Calu3 (cell line): ENCODE measurements at regions of chr7 and their contacts with region 1.

Region 1: GRCh38 chr7:109844362-109844761 is 1246.6 kb upstream of the LRRN3 start:
- DNase-seq: peak; percentile 34
- H3K4me3 Mint-ChIP-seq: no peak overlapping the region
- H3K27ac Mint-ChIP-seq: no peak overlapping the region
- H3K4me1 Mint-ChIP-seq: no peaks in the 10 kb centered on the region
- H3K27me3 Mint-ChIP-seq: no peaks in the 10 kb centered on the region
- CTCF ChIP-seq: peak; percentile 33

Region 2: GRCh38 chr7:109734601-109735000 is 109.8 kb before region 1 on chr7:
- CTCF ChIA-PET with region 1: no interaction called
- intact Hi-C with region 1: no loop called
- DNase-seq: no peak
- H3K4me3 Mint-ChIP-seq: no peak overlapping the region
- H3K27ac Mint-ChIP-seq: no peak overlapping the region
- H3K4me1 Mint-ChIP-seq: no peaks in the 10 kb centered on the region
- H3K27me3 Mint-ChIP-seq: no peaks in the 10 kb centered on the region
- CTCF ChIP-seq: no peak

Region 3: DNA sequence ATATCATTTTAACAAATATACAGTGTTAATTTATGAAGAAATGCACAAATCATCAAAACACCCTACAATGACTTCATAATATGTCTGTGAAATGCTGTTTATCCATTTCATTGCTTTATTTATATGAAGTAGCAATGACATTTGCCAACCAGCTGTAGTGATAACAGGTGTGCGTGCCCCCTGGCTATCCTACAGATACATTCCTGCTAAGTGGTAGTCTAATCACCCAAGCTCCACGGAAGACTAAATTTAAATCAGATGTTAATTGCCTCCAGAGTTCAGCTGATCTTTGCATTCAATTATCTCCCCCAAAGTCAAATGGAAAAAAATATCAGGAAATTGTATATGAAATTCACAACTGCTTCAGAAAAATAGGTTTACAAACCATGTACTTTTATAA is 82.4 kb after region 1 on chr7:
- CTCF ChIA-PET with region 1: no interaction called
- intact Hi-C with region 1: no loop called
- DNase-seq: no peak
- H3K4me3 Mint-ChIP-seq: no peak overlapping the region
- H3K27ac Mint-ChIP-seq: no peak overlapping the region
- H3K4me1 Mint-ChIP-seq: no peaks in the 10 kb centered on the region
- H3K27me3 Mint-ChIP-seq: no peaks in the 10 kb centered on the region
- CTCF ChIP-seq: no peak

Region 4: DNA sequence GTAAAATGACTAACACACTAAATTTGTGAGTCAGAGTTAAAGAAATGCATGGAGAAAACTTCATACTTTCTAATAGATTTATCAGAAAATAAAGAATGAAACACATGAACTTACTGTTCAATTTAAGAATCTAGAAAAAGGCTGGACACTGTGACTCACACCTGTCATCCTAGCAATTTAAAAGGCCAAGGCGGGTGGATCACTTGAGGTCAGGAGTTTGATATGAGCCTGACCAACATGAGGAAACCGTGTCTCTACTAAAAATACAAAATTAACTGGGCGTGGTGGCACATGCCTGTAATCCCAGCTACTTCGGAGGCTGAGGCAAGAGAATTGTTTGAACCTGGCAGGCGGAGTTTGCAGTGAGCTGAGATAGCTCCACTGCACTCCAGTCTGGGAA is 140.4 kb after region 1 on chr7:
- CTCF ChIA-PET with region 1: no interaction called
- intact Hi-C with region 1: no loop called
- DNase-seq: no peak
- H3K4me3 Mint-ChIP-seq: no peak overlapping the region
- H3K27ac Mint-ChIP-seq: no peak overlapping the region
- H3K4me1 Mint-ChIP-seq: peaks cover 9% of the 10 kb centered on the region
- H3K27me3 Mint-ChIP-seq: no peaks in the 10 kb centered on the region
- CTCF ChIP-seq: no peak

Region 5: DNA sequence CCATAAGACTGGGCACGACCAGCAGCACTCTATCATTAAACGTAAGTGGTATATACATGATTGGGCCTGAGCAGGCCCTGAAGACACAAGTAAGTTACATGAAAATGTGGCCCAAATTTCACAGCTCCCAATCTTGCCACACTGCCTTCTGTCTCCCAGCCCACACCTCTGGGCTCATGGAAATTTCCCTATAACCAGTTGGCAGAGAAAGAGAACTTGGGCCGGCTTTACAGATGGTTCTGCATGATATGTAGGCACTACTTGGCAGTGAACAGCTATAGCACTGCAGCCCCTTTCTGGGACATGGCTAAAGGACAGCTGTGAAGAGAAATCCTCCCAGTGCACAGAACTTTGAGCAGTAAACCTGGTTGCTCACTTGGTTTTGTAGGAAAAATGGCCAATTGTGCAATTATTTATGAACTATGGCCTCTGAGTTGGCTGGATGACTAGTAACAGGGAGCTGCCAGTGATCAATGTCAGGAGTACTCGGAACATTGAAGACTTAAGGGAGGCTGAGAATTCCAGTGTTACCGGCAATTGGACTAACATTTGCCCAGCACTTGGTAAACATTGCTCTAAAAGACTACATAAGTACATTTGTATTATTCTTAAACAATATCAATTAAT is 239.9 kb after region 1 on chr7:
- CTCF ChIA-PET with region 1: no interaction called
- intact Hi-C with region 1: loop called (anchors 10 kb)
- DNase-seq: no peak
- H3K4me3 Mint-ChIP-seq: no peak overlapping the region
- H3K27ac Mint-ChIP-seq: no peak overlapping the region
- H3K4me1 Mint-ChIP-seq: no peaks in the 10 kb centered on the region
- H3K27me3 Mint-ChIP-seq: no peaks in the 10 kb centered on the region
- CTCF ChIP-seq: no peak

Region 6: DNA sequence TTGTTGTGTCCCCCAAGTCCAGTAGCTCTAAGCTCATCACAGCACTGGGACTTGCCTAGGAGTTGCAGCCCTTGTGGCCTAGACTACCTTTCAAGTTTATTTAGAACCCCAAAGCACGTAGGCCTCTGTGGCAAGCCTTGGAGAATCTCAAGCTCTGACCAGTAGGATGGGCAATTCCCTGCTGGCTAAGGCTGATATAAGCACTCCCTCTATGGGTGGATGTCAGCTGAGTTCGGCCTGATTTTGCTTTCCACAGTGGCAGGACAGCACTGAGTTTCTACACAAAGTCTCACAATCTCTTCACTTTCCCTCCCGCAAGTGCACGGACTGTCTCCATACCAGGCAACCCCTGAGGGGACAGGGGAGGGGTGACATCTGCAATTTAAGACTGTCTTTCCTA is 360.2 kb after region 1 on chr7:
- CTCF ChIA-PET with region 1: no interaction called
- intact Hi-C with region 1: loop called (anchors 1 kb)
- DNase-seq: peak; percentile 13
- H3K4me3 Mint-ChIP-seq: no peak overlapping the region
- H3K27ac Mint-ChIP-seq: no peak overlapping the region
- H3K4me1 Mint-ChIP-seq: peaks cover 9% of the 10 kb centered on the region
- H3K27me3 Mint-ChIP-seq: no peaks in the 10 kb centered on the region
- CTCF ChIP-seq: no peak

Region 7: GRCh38 chr7:111098011-111098925 is 1253.9 kb after region 1 on chr7:
- CTCF ChIA-PET with region 1: no interaction called
- intact Hi-C with region 1: loop called (anchors 2 kb)
- DNase-seq: peak; percentile 35
- H3K4me3 Mint-ChIP-seq: no peak overlapping the region
- H3K27ac Mint-ChIP-seq: no peak overlapping the region
- H3K4me1 Mint-ChIP-seq: peaks cover 15% of the 10 kb centered on the region
- H3K27me3 Mint-ChIP-seq: no peaks in the 10 kb centered on the region
- CTCF ChIP-seq: no peak

Region 8: GRCh38 chr7:111735661-111736551 is 1891.5 kb after region 1 on chr7:
- CTCF ChIA-PET with region 1: interaction called, 4 read pairs
- intact Hi-C with region 1: loop called (anchors 1 kb)
- DNase-seq: peak; percentile 72
- H3K4me3 Mint-ChIP-seq: no peak overlapping the region
- H3K27ac Mint-ChIP-seq: no peak overlapping the region
- H3K4me1 Mint-ChIP-seq: peaks cover 11% of the 10 kb centered on the region
- H3K27me3 Mint-ChIP-seq: no peaks in the 10 kb centered on the region
- CTCF ChIP-seq: peak; percentile 68